CD4-positive, alpha-beta memory T cell (primary cell): ENCODE measurements at regions of chr16 and their contacts with region 1.

Region 1: GRCh38 chr16:31179747-31180459 is at the start of gene FUS:
- DNase-seq: peak; percentile 89 to 95 (median 94)
- H3K4me3 ChIP-seq: peak within 1 kb of the TSS; percentile 96 to 97
- H3K4me3 Mint-ChIP-seq: peak within 1 kb of the TSS; percentile 97 to 99 (median 98)
- H3K27ac ChIP-seq: peak within 1 kb of the TSS; percentile 89
- H3K27ac Mint-ChIP-seq: peak within 1 kb of the TSS; percentile 95 to 100 (median 99)
- H3K4me1 ChIP-seq: peaks cover 66% of the 10 kb centered on the region
- H3K4me1 Mint-ChIP-seq: peaks cover 41 to 77% (median 54%) of the 10 kb centered on the region in 4 donors
- H3K27me3 ChIP-seq: no peaks in the 10 kb centered on the region
- H3K27me3 Mint-ChIP-seq: no peaks in the 10 kb centered on the region
- total RNA-seq, gene FUS: 500 to 536 TPM

Region 2: DNA sequence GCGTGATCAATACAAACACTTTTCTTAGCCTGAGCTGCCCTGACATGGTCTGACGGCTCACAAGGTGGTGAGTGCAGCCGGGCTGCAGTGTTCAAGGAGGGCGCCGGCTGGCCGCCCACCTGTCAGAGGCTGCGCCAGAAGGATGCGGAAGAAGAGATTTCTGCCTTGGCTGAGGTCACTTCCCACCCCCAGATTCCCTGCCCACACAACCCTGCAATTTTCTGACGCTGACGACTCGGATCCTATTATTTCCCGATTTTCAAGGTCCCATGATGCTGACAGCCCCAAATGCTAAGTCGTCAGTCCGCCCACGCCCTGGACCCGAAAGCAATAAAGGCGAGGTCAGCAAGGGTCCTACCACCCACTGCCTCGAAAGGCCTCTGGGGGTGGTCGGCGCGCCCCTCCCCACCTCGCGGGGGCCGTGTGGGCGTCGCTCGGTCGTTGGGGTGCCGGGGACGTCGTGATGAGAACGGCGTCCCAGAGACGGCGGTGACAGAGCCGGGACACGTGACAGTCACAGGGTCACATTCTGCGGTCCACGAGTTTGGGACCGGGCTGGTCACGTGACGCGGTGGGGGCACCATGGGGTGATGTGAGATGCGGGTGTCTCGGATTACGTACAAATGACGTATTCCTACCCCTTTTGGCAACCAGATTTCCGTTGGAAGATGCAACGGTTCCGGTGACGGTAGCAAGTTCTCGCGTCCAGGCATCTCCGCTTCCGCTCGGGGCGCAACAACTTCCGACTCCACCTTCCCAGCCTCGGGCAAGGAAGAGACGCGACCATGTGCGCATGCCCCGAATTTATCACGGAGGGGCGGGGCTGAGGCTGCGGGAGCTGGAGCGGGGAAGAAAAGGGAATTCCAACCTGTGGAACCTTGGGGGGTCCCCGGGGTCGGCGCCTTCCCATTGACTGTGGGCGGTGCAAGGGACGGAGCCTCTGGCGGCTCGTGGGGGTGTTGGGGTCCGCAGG is 146.9 kb before region 1 on chr16 and contains the start of gene STX4:
- CTCF ChIA-PET with region 1: no interaction called
- POLR2A ChIA-PET with region 1: interaction called, 7 read pairs
- intact Hi-C with region 1: loop called (anchors 1 kb)
- DNase-seq: peak; percentile 95 to 100 (median 98)
- H3K4me3 ChIP-seq: peak within 1 kb of the TSS; percentile 83 to 97
- H3K4me3 Mint-ChIP-seq: peak within 1 kb of the TSS; percentile 91 to 98 (median 95)
- H3K27ac ChIP-seq: peak within 1 kb of the TSS; percentile 86
- H3K27ac Mint-ChIP-seq: peak within 1 kb of the TSS; percentile 93 to 98 (median 98)
- H3K4me1 ChIP-seq: peaks cover 24% of the 10 kb centered on the region
- H3K4me1 Mint-ChIP-seq: peaks cover 6 to 38% (median 22%) of the 10 kb centered on the region in 4 donors
- H3K27me3 ChIP-seq: no peaks in the 10 kb centered on the region
- H3K27me3 Mint-ChIP-seq: no peaks in the 10 kb centered on the region
- total RNA-seq, gene STX4: 106 to 111 TPM

Region 3: DNA sequence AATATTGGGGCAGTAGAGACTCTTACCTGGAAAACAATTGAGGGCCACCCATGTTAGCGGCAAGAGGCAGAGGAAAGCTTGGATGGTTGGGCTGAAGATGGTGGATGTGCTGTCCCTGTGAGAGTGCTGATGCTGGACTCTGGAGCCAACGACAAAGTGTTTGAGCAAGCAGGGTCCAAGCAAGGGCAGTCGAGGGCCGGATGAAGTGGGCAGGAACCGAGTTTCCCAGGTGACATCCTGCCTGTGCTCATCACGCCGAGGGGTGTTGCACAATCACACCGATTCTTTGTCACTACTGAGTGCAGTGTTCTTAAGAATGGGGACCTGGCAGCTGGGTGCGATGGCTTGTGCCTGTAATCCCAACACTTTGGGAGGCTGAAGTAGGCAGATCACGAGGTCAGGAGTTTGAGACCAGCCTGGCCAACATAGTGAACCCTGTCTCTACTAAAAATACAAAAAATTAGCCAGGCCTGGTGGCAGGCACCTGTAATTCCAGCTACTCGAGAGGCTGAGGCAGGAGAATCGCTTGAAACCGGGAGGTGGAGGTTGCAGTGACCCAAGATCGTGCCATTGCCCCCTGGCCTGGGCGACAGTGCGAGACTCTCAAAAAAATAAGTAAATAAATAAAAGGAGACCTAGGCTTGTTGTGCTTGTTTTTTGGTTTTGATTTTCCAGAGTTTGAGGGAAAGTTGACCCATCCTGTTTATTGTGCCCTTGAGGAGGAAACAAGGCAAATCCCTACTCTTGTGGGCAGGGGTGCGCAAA is 16.6 kb after region 1 on chr16:
- CTCF ChIA-PET with region 1: interaction called, 11 read pairs
- POLR2A ChIA-PET with region 1: interaction called, 119 read pairs
- intact Hi-C with region 1: no loop called
- DNase-seq: no peak
- H3K4me3 ChIP-seq: no peak overlapping the region
- H3K4me3 Mint-ChIP-seq: no peak overlapping the region
- H3K27ac ChIP-seq: no peak overlapping the region
- H3K27ac Mint-ChIP-seq: peak overlapping the region in 5 of 7 donors; percentile 18 to 91 (median 77)
- H3K4me1 ChIP-seq: peaks cover 36% of the 10 kb centered on the region
- H3K4me1 Mint-ChIP-seq: peaks cover 38 to 66% (median 48%) of the 10 kb centered on the region in 4 donors
- H3K27me3 ChIP-seq: no peaks in the 10 kb centered on the region
- H3K27me3 Mint-ChIP-seq: no peaks in the 10 kb centered on the region